ENCODE measurements at regions of chr12 and their contacts with region 1.

Region 1: GRCh38 chr12:96029826-96030225 is 5.6 kb downstream of the LTA4H start:
- DNase-seq: no peak
- ATAC-seq: no peak
- H3K4me3 Mint-ChIP-seq: no peak overlapping the region
- H3K27ac Mint-ChIP-seq: no peak overlapping the region
- H3K4me1 Mint-ChIP-seq: peaks cover 15% of the 10 kb centered on the region
- H3K27me3 Mint-ChIP-seq: no peaks in the 10 kb centered on the region

Region 2: DNA sequence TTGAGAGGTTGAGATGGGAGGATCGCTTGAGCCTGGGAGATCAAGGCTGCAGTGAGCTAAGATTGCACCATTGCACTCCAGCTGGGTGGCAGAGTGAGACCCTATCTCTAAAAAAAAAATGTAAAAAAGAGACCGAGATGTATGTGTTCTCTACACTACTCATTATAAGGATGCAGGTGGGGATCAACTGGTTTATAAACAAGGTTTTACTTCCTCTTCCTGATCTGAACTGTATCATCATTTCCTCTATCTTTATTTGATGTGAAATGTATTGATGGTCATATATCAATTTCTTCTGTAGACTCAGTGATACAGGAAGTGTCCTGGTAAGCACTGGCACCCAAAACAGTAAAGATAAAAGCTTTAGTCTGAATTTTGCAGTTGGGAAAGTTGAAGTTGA is 458.5 kb before region 1 on chr12:
- POLR2A ChIA-PET with region 1: interaction called, 10 read pairs
- DNase-seq: no peak
- ATAC-seq: peak; percentile 50
- H3K4me3 Mint-ChIP-seq: no peak overlapping the region
- H3K27ac Mint-ChIP-seq: peak overlapping the region; percentile 19
- H3K4me1 Mint-ChIP-seq: peaks cover 13% of the 10 kb centered on the region
- H3K27me3 Mint-ChIP-seq: peaks cover 3% of the 10 kb centered on the region

Region 3: DNA sequence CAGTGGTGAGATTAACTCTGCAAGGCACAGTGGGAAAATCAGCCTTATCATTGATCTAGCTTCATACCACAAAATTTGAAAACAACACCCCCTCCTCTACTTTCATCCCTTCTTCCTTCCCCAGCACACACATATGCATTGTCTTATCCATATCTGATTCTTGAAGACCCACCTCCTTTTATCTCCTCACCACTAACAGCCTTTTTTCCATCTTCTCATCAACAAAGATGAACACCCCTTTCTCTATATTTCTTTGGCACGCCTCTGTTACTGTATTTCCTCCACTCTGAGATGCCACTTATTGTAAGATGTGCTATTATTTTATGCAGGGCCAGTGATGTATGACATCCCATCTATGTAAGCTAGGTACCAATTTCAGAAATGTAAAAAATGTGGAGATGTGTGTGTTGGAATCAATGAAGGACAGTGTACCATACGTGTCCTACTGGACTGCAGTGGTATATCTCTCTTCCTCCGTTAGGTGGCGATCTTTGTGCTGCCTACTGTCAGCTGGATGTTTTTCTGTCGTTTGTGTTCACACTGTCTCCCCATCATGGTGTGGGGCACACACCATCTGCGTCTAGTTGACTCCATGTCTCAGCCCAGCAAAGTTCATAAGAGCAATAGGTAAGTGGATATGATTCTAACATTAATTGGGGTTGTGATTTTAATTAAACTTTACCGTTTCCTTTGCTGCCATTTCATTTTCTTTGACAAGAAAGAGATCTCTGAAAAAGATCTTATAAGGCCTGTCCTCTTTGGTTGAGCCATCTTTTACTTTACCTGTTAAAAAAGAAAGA is 111.4 kb before region 1 on chr12:
- POLR2A ChIA-PET with region 1: no interaction called
- DNase-seq: no peak
- ATAC-seq: peak; percentile 95
- H3K4me3 Mint-ChIP-seq: no peak overlapping the region
- H3K27ac Mint-ChIP-seq: no peak overlapping the region
- H3K4me1 Mint-ChIP-seq: no peaks in the 10 kb centered on the region
- H3K27me3 Mint-ChIP-seq: peaks cover 18% of the 10 kb centered on the region